Posterior vena cava (tissue), 2 donors: ENCODE measurements at regions of chr3 and their contacts with region 1.

Region 1: GRCh38 chr3:187208159-187208558 is 10.9 kb downstream of the RTP1 start:
- DNase-seq: no peak

Region 2: DNA sequence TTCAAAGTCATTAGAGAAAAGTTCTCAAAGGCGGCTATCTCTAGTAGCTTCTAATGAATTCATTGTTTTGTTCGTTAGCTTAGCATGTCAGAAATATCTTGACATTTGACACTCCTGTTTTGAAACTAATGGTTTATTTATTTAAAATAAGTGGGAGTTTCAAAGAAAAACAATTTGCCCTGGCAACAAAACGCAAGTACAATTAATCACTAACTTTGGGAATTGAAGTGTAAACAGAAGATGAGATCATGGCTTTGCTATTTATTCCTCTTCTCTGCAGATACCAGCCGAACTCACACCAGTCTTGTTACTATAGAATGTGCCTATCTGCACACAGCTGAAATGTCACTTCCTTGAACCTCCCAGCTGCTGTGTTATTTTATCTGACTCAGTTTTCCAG is 55.9 kb after region 1 on chr3:
- intact Hi-C with region 1: no loop called
- DNase-seq: no peak

Region 3: GRCh38 chr3:188082031-188082430 is 873.9 kb after region 1 on chr3:
- intact Hi-C with region 1: loop called in 1 of 2 experiments (anchors 10 kb)
- DNase-seq: no peak